K562 (cell line): ENCODE measurements at regions of chr5 and their contacts with region 1.

Region 1: DNA sequence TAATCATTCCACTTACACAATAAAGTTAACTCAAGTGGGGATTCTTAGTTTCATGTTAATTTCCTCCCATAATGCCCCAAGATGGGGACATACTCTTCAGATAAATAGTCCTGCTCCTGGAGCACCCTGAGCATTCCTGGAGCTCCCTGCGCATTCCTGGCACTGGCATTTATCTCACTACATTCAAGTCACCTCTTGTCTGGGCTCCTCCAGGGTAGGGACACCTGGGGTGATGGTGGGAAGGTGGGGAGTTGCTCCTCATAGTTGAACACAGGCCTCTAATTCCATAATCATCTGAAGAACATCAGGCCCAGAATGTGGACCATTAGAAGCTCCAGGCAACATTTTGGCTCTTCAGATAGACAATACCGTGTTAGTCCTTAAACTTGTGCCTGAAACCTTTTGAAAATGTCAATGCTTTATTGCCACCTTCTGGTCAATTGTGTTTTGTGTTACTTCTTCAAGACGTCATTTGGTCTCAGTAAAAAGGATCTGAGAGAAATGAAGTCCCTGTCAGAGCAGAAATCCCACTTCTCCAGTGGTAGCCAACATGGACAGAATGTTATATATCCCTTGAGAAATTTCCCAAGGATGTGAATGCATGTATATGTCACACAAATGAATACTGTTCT is 14.2 kb upstream of the AGGF1 start:
- DNase-seq: peak in 2 of 4 experiments; percentile 21 to 66
- ATAC-seq: peak; percentile 75
- H3K4me3 ChIP-seq: no peak overlapping the region
- H3K27ac ChIP-seq: no peak overlapping the region
- H3K4me1 ChIP-seq: no peaks in the 10 kb centered on the region
- H3K27me3 ChIP-seq: peaks cover 0 to 4% of the 10 kb centered on the region in 2 experiments; a peak in 1 of 5 replicates
- CTCF ChIP-seq: peak; percentile 33 to 64 (median 47); a peak in 4 of 6 replicates
- EP300 ChIP-seq: no peak
- POLR2A ChIP-seq: no peak
- RAD21 ChIP-seq: peak; percentile 82 to 83

Region 2: DNA sequence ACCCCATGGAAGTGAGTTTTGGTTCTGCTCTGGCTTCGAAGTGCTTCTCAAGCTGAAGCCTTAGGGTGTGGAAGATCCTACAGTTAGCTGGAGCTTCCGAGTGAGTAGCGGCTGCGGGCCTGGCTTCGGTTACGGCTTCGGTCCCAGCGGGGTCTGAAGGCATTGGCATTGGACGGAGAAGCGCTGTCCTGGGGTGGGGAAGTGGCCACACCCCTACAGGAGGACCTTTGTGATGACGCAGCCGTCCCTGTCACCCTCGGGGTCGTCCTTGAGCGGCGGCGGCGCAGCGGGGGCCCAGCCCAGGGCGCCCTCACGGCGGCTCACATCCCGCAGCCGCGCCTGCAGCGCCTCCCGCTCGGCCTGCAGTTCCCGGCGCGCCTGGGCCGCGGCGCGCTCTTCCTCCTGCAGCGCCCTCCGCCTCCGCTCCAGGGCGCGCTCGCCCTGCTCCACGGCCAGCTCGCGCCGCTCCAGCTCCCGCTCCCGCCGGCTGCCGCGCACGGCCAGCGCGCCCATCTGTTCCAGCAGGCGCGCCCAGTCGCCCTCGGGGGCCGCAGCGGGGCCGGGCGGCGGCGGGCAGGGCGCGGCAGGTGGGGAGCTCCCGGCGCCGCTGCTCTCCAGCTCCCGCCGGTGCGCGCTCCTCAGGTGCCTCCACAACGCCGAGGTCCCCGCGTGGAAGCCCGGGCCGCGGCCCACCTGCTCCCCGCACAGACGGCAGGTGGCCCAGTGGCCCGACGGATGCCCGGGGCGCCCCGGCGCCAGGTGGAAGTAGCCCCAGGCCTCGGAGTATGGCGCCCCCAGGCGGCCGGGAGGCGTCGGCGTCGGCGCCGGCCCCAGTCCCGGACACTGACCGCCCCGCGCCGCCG is 61.1 kb after region 1 on chr5:
- CTCF ChIA-PET with region 1: no interaction called
- POLR2A ChIA-PET with region 1: no interaction called
- in situ Hi-C with region 1: no loop called
- intact Hi-C with region 1: loop called (anchors 2 kb)
- DNase-seq: peak; percentile 76 to 83 (median 80)
- ATAC-seq: peak; percentile 97
- H3K4me3 ChIP-seq: peak overlapping the region; percentile 59
- H3K27ac ChIP-seq: no peak overlapping the region
- H3K4me1 ChIP-seq: peaks cover 0 to 13% of the 10 kb centered on the region in 2 experiments; a peak in 3 of 5 replicates
- H3K27me3 ChIP-seq: no peaks in the 10 kb centered on the region
- CTCF ChIP-seq: peak; percentile 50 to 86 (median 61); a peak in 5 of 6 replicates
- EP300 ChIP-seq: no peak
- POLR2A ChIP-seq: no peak
- RAD21 ChIP-seq: peak; percentile 45 to 52; a peak in 3 of 4 replicates

Region 3: DNA sequence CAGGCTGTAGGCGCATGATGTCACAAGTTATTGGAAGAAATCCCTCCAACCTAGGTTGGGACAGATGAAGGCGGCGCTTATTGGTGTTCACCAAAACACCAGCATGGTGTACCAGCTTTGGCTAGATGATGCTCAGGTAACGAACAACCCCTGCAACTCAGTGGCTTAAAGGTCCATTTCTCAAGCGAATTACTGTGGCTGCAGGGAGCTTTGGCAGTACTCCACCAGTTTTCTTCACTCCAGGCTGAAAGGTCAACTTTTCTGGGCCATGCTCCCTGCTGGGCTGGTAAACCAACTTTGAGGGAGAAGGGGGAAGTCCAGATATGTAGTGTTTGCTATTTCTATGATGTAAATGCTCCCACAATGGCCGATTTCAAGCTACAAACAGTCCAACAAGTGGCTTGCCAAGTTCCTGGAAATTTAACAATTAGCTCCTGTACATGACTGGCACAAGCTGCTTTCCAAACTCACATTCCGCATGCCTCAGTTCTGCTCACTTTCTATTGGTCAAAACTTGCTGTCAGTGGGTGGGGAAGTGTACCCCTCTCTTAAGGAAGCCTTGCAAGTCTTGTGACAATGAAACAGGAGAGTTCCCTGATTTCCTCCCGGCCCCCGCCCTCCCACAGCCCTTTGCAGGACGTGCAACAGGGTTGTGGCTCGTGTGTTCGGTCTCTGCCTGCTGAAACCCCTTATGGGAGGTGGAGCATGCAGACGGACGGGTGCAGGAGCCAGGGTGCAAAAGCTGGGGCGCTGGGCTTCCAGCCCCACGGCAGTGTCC is 71.6 kb after region 1 on chr5:
- CTCF ChIA-PET with region 1: no interaction called
- POLR2A ChIA-PET with region 1: no interaction called
- in situ Hi-C with region 1: no loop called
- intact Hi-C with region 1: no loop called
- DNase-seq: no peak
- ATAC-seq: no peak
- H3K4me3 ChIP-seq: no peak overlapping the region
- H3K27ac ChIP-seq: no peak overlapping the region
- H3K4me1 ChIP-seq: peaks cover 0 to 5% of the 10 kb centered on the region in 2 experiments; a peak in 1 of 5 replicates
- H3K27me3 ChIP-seq: peaks cover 3 to 20% of the 10 kb centered on the region in 2 experiments; a peak in 4 of 5 replicates
- CTCF ChIP-seq: no peak
- EP300 ChIP-seq: no peak
- POLR2A ChIP-seq: no peak
- RAD21 ChIP-seq: no peak